ENCODE measurements at regions of chr1 and their contacts with region 1.

Region 1: DNA sequence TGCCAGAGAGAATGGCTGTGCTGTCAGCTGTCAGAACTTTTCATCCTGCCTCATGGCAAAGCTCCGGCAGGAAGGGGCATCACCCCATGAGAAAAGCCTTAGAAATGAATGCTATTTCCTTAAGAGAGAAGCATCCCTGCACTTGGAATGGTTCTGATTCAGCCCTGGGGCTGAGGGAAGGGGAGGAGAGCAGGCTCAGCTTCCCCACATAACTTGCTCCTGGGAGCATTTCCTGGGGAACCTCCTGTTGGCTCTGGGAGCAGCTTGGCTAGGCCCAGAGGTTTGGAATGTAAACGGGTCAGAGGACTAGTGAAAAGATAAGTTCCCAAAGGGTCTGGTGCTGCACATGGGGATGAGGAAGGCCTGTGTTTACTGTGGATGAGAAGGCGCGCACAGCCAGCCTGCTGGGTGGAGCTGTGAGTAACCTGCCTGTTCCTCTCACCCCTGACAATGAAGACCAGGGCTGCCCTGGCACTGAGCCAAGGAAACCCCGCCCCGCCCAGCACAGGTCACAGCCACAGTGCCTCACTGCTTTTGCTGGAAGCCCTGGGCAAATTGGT is 5.0 kb downstream of the PRELP start:
- DNase-seq: peak; percentile 84 to 85
- H3K4me3 ChIP-seq: peak overlapping the region; percentile 69 to 74
- H3K27ac ChIP-seq: peak overlapping the region; percentile 91 to 93
- H3K4me1 ChIP-seq: peaks cover 0 to 78% (median 52%) of the 10 kb centered on the region in 4 donors
- H3K27me3 ChIP-seq: no peaks in the 10 kb centered on the region
- CTCF ChIP-seq: no peak

Region 2: DNA sequence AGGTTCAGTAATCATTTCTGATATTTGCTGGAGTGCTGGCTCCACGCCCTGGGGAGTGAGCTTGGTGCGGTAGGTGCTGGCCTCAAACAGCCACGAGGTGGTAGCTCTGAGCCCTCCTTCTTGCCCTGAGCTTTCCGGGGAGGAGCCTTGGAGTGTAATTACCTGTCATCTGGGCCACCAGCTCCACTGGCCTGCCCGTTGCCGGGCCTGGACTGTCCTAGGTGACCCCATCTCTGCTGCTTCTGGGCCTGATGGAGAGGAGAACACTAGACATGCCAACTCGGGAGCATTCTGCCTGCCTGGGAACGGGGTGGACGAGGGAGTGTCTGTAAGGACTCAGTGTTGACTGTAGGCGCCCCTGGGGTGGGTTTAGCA is 314.1 kb before region 1 on chr1:
- intact Hi-C with region 1: no loop called
- DNase-seq: no peak
- H3K4me3 ChIP-seq: no peak overlapping the region
- H3K27ac ChIP-seq: no peak overlapping the region
- H3K4me1 ChIP-seq: no peaks in the 10 kb centered on the region
- H3K27me3 ChIP-seq: peaks cover 0 to 43% of the 10 kb centered on the region in 2 donors
- CTCF ChIP-seq: no peak

Region 3: DNA sequence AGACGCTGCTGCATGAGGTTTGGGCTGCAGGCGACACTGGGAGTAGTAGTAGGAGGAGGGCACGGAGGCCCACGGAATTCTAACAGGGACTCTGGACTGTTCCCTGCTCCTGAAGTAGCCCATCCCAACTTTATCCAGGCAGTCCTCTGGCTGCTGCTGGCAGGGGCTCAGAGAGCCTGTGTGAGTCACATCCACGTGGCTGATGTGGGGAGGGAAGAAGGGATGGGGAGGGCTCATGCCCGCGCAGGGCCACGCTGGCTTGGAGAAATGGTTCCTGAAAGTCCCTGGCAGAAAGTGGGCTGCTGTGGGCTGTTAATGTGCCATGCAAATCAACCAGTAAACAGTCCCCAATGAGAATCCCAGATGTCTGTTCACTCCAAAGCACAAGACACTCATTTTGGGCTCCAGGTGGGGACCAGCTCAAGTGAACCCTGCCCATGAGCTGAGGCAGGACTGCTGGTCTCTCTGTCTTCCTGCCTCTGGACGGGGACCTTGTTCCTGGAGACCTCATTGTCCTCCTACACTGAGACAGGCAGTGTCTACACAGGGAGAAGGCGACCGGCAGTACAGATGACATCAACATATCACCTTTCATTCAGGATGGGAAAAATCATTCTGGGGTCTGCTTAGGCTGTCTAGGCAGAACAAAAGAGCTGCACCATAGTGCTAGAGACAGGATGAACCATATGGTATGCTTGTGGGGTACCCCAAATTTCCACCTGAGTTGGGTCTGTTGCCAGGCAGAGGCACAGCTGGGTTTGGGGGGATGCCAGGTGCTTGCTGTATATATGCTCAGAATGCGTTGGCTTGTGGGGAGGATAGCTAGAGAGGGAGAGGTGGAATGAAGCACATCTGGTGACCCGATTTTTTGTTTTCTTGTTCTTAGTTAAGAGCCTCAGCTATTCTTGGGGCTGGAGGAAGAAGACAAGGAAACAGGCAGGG is 71.8 kb before region 1 on chr1:
- intact Hi-C with region 1: loop called (anchors 10 kb)
- DNase-seq: peak; percentile 95 to 97
- H3K4me3 ChIP-seq: no peak overlapping the region
- H3K27ac ChIP-seq: peak overlapping the region; percentile 81 to 91
- H3K4me1 ChIP-seq: peaks cover 11 to 75% (median 58%) of the 10 kb centered on the region in 4 donors
- H3K27me3 ChIP-seq: no peaks in the 10 kb centered on the region
- CTCF ChIP-seq: no peak

Region 4: DNA sequence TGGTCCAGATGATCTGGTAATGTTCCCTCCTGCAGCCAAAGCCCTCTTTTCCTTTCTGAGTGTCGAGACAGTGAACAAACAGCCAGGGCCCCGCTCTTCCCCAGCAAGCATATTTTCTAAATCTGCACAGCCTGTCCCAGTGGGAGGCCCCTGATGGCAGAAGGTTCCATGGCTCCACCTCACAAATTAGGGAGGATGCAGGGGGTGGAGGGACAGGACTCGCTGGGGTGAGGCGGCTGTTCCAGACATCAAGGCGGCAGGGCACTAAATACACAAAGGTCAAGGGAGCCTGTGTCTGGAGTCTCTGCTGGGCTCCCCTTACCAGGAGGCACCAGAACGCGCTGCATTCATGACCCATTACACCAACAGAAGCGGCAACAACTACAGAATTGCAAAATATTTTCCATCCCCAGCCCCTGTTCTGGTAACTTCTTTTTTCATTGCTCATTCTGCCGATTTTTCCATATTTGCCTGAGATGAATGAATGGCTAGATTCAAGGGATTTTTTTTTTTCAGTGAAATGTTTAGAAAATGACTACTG is 32.0 kb before region 1 on chr1:
- intact Hi-C with region 1: loop called (anchors 5 kb)
- DNase-seq: peak; percentile 73 to 88
- H3K4me3 ChIP-seq: peak overlapping the region in 1 of 2 donors; percentile 9
- H3K27ac ChIP-seq: peak overlapping the region; percentile 73 to 79
- H3K4me1 ChIP-seq: peaks cover 0 to 44% (median 19%) of the 10 kb centered on the region in 4 donors
- H3K27me3 ChIP-seq: no peaks in the 10 kb centered on the region
- CTCF ChIP-seq: no peak

Measured in tibial artery (tissue), 4 donors.